Panc1 (cell line): ENCODE measurements at regions of chr10 and their contacts with region 1.

Region 1: DNA sequence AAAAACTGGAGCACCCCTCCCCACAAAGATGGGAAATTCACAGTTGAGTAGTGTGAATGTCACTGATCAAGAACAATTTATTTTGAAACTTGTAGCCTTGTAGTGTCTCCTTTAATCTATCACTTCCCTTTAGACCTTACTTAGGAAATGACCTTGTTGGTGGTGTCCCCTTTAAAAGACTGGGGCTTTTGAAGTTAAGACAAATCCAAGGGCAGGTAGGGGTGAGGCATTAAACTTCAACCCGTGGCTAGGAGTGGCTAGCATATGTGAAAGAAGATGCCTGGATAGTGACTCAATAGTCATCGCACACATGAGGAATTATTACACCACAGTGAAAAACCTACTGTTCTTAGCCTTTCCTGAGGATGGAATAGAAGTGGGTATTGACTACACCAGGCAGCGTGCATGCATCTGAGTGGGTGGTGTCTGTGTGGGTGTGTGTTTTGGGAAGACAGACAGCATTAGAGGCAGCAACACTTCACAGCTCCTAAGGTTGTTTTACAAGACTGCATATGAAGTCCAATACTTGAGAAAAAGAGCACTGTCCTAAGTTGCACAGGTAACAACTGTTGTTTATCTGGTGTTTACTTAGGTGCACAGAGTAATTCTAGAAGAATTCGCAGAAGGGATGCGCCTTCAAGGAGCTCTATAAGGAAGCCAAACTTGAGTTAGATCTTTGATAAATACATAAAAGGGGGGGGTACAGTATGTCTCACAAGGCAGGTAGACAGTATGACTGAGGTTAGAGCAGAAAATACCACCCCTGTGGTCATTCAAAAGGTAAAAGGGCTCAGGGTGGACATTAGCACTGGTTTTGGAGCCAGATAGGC is 32.9 kb downstream of the ABLIM1 start:
- DNase-seq: no peak
- ATAC-seq: peak; percentile 7; the same call in 1 of the 2 replicates
- H3K4me3 ChIP-seq: no peak overlapping the region
- H3K27ac ChIP-seq: peak overlapping the region; percentile 95
- H3K4me1 ChIP-seq: peaks cover 99% of the 10 kb centered on the region
- H3K27me3 ChIP-seq: no peaks in the 10 kb centered on the region
- CTCF ChIP-seq: no peak

Region 2: DNA sequence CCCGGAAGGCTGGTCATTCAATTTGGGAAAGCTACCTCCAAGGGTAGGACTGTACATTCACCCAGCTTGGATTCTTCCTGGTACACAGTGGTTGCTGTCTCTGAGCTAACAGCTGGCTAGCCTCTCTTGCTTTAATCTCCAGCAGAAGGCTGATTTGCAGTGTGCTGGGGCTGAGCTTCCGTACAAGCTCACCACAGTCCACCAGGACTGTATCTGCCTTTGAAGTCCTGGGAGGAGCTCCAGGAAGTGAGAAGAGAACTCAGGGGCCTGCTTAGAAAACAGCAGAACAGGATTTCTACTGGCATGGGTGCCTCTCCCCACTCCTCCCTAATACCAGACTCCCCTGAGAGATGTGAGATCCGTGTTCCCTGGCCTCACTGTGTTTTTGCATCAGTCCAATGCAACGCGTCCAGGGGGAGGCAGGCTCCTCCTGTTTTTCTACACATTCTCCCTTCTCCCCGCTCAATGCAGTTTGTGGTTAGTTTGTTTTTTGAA is 227.5 kb before region 1 on chr10:
- CTCF ChIA-PET with region 1: no interaction called
- POLR2A ChIA-PET with region 1: no interaction called
- in situ Hi-C with region 1: no loop called
- intact Hi-C with region 1: no loop called
- DNase-seq: no peak
- ATAC-seq: peak; percentile 42
- H3K4me3 ChIP-seq: no peak overlapping the region
- H3K27ac ChIP-seq: peak overlapping the region; percentile 95
- H3K4me1 ChIP-seq: peaks cover 100% of the 10 kb centered on the region
- H3K27me3 ChIP-seq: no peaks in the 10 kb centered on the region
- CTCF ChIP-seq: peak; percentile 35; the same call in 1 of the 2 replicates

Region 3: GRCh38 chr10:114611625-114612024 is 13.5 kb before region 1 on chr10:
- CTCF ChIA-PET with region 1: no interaction called
- POLR2A ChIA-PET with region 1: interaction called, 17 read pairs
- in situ Hi-C with region 1: no loop called
- intact Hi-C with region 1: no loop called
- DNase-seq: no peak
- ATAC-seq: peak; percentile 52
- H3K4me3 ChIP-seq: no peak overlapping the region
- H3K27ac ChIP-seq: peak overlapping the region; percentile 64; the same call in 1 of the 2 replicates
- H3K4me1 ChIP-seq: peaks cover 79% of the 10 kb centered on the region
- H3K27me3 ChIP-seq: no peaks in the 10 kb centered on the region
- CTCF ChIP-seq: no peak